CD4-positive, alpha-beta T cell (primary cell): ENCODE measurements at regions of chr11 and their contacts with region 1.

Region 1: DNA sequence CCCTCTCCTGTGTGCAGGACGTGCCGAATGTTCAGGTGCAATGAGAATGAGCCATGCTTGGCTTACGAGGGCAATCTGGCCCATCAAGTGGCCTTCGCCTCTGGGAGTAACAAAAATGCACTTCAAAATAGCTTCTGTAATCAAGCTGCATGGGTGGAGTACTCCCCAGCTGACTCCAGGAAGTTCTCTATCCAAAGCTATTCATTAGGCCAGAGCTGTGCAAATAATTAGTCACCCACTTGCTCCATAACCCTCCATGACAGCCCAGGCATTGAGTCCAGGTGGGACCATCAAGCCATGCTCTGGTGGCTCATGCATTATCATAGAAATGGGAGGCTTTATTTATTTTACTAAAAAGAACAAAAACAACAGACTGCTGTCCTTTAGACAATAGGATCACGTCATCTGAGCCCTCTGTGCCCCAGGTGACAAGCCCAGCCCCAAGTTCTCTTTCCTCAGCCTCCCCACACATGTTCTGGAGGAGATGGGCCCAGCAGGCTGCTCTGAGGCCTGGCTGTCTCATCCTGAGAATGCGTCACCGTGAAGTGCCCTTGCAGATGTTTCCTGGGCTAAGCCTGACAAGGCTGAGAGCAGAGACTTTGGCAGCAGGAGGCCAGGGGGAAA is 244.7 kb downstream of the ETS1 start:
- DNase-seq: peak in 11 of 14 experiments; percentile 24 to 83 (median 67)
- ATAC-seq: peak; percentile 67
- H3K4me3 ChIP-seq: no peak overlapping the region
- H3K4me3 Mint-ChIP-seq: peak overlapping the region; percentile 73
- H3K27ac ChIP-seq: peak overlapping the region; percentile 79 to 88
- H3K27ac Mint-ChIP-seq: peak overlapping the region; percentile 99
- H3K4me1 ChIP-seq: peaks cover 65% of the 10 kb centered on the region
- H3K4me1 Mint-ChIP-seq: peaks cover 97% of the 10 kb centered on the region
- H3K27me3 ChIP-seq: no peaks in the 10 kb centered on the region
- H3K27me3 Mint-ChIP-seq: no peaks in the 10 kb centered on the region
- CTCF ChIP-seq: no peak

Region 2: GRCh38 chr11:128328955-128329551 is 13.6 kb before region 1 on chr11:
- CTCF ChIA-PET with region 1: interaction called, 8 read pairs
- POLR2A ChIA-PET with region 1: interaction called, 23 read pairs
- intact Hi-C with region 1: loop called in 1 of 2 experiments (anchors 1 kb)
- DNase-seq: peak in 8 of 14 experiments; percentile 40 to 83 (median 54)
- ATAC-seq: peak; percentile 16
- H3K4me3 ChIP-seq: no peak overlapping the region
- H3K4me3 Mint-ChIP-seq: peak overlapping the region; percentile 60
- H3K27ac ChIP-seq: peak overlapping the region; percentile 65 to 78
- H3K27ac Mint-ChIP-seq: peak overlapping the region; percentile 93
- H3K4me1 ChIP-seq: peaks cover 67% of the 10 kb centered on the region
- H3K4me1 Mint-ChIP-seq: peaks cover 86% of the 10 kb centered on the region
- H3K27me3 ChIP-seq: no peaks in the 10 kb centered on the region
- H3K27me3 Mint-ChIP-seq: no peaks in the 10 kb centered on the region
- CTCF ChIP-seq: no peak

Region 3: DNA sequence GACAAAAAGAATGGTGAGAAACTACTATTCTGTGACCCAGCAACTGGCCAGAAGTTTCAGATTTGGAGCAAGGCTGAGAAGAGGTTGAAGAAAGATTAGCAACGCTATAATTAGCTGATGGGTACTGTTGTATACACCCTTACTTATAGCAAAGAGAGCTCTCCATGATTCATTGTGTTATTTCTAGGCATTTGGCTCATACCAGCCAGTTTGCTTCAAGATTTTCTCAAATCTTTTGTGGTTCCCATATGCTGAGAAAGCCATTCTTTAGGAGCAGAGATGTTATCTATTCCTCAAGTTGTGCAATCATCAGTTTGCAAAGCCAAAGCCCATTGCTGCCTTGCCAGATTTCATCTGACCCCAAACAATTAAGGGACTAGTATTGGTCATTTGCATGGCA is 65.3 kb after region 1 on chr11:
- CTCF ChIA-PET with region 1: no interaction called
- POLR2A ChIA-PET with region 1: no interaction called
- intact Hi-C with region 1: no loop called
- DNase-seq: no peak
- ATAC-seq: no peak
- H3K4me3 ChIP-seq: no peak overlapping the region
- H3K4me3 Mint-ChIP-seq: no peak overlapping the region
- H3K27ac ChIP-seq: no peak overlapping the region
- H3K27ac Mint-ChIP-seq: no peak overlapping the region
- H3K4me1 ChIP-seq: no peaks in the 10 kb centered on the region
- H3K4me1 Mint-ChIP-seq: peaks cover 78% of the 10 kb centered on the region
- H3K27me3 ChIP-seq: no peaks in the 10 kb centered on the region
- H3K27me3 Mint-ChIP-seq: no peaks in the 10 kb centered on the region
- CTCF ChIP-seq: no peak

Region 4: GRCh38 chr11:128422576-128423370 is 80.2 kb after region 1 on chr11:
- CTCF ChIA-PET with region 1: interaction called, 5 read pairs
- POLR2A ChIA-PET with region 1: interaction called, 5 read pairs
- intact Hi-C with region 1: loop called in 1 of 2 experiments (anchors 5 kb)
- DNase-seq: peak; percentile 64 to 96 (median 82)
- ATAC-seq: peak; percentile 92
- H3K4me3 ChIP-seq: peak overlapping the region; percentile 13
- H3K4me3 Mint-ChIP-seq: peak overlapping the region; percentile 74
- H3K27ac ChIP-seq: peak overlapping the region in 1 of 2 donors; percentile 24
- H3K27ac Mint-ChIP-seq: peak overlapping the region; percentile 96
- H3K4me1 ChIP-seq: peaks cover 37% of the 10 kb centered on the region
- H3K4me1 Mint-ChIP-seq: peaks cover 75% of the 10 kb centered on the region
- H3K27me3 ChIP-seq: no peaks in the 10 kb centered on the region
- H3K27me3 Mint-ChIP-seq: no peaks in the 10 kb centered on the region
- CTCF ChIP-seq: no peak

Region 5: DNA sequence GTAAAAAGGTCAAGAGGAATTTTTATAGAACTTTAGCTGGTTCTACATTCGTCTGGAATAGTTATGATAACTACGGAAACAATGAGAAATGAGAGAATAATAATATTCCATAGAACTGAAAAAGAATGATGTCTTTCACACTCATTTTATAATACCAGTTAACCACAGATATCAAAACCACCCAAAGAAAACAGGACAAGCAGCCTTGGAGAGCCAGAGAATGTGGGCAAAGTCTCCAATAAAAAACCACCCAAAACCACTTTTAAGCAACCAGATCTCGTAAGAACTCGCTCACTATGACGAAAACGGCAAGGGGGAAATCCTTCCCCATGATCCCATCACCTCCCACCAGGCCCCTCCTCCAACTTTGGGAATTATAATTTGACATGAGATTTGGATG is 788.7 kb after region 1 on chr11:
- CTCF ChIA-PET with region 1: no interaction called
- POLR2A ChIA-PET with region 1: no interaction called
- intact Hi-C with region 1: no loop called
- DNase-seq: no peak
- ATAC-seq: no peak
- H3K4me3 ChIP-seq: no peak overlapping the region
- H3K4me3 Mint-ChIP-seq: no peak overlapping the region
- H3K27ac ChIP-seq: no peak overlapping the region
- H3K27ac Mint-ChIP-seq: no peak overlapping the region
- H3K4me1 ChIP-seq: no peaks in the 10 kb centered on the region
- H3K4me1 Mint-ChIP-seq: no peaks in the 10 kb centered on the region
- H3K27me3 ChIP-seq: no peaks in the 10 kb centered on the region
- H3K27me3 Mint-ChIP-seq: no peaks in the 10 kb centered on the region
- CTCF ChIP-seq: no peak